Activated T-helper 1 cell treated with anti-CD3 and anti-CD28 coated beads, Interleukin-12 subunit alpha, Interleukin-12 subunit beta, Interleukin-2, Interleukin-4 antibody, amounts not matched to agents 30 ng/mL and 10 ng/mL and 1 ng/mL, durations not matched to agents 14 hours and 24 hours and 36 hours (primary cell): ENCODE measurements at regions of chr2 and their contacts with region 1.

Region 1: GRCh38 chr2:62705007-62705829 is at the start of gene EHBP1:
- DNase-seq: peak; percentile 97
- H3K4me3 Mint-ChIP-seq: peak within 1 kb of the TSS; percentile 85
- H3K27ac Mint-ChIP-seq: peak within 1 kb of the TSS; percentile 61
- H3K4me1 Mint-ChIP-seq: peaks cover 34% of the 10 kb centered on the region
- H3K27me3 Mint-ChIP-seq: peaks cover 6% of the 10 kb centered on the region
- total RNA-seq, gene EHBP1: 23.7 and 24.4 TPM in 2 replicates

Region 2: DNA sequence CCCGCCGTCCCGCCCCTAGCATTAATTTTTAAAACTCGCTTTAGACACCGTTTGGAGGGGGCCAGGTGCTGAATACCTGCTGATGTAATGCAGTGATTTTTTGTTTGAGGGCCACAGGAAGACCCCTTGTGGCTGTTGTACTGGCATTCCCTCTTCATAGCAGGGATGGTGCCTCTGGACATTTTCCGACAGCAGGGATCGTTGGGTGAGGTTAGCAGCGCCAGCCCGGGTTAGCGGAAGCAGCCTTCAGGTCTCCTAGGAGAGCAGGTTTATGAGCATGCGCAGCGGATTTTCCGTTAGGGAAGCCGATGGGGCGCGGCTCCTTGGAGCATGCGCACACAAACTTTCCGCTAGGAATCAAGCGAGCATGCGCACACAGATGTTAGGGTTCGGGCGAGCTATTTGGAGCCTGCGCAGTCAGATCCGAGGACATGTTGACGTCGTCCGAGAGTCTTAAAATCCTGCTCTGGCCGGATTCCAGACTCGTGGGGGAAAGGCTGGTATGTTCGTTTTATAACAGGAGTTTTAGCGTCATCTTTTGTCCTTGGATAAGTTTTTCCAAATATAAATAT is 1560.4 kb before region 1 on chr2:
- intact Hi-C with region 1: loop called (anchors 5 kb)
- DNase-seq: peak; percentile 92
- H3K4me3 Mint-ChIP-seq: peak overlapping the region; percentile 94
- H3K27ac Mint-ChIP-seq: peak overlapping the region; percentile 94
- H3K4me1 Mint-ChIP-seq: peaks cover 5% of the 10 kb centered on the region
- H3K27me3 Mint-ChIP-seq: no peaks in the 10 kb centered on the region

Region 3: DNA sequence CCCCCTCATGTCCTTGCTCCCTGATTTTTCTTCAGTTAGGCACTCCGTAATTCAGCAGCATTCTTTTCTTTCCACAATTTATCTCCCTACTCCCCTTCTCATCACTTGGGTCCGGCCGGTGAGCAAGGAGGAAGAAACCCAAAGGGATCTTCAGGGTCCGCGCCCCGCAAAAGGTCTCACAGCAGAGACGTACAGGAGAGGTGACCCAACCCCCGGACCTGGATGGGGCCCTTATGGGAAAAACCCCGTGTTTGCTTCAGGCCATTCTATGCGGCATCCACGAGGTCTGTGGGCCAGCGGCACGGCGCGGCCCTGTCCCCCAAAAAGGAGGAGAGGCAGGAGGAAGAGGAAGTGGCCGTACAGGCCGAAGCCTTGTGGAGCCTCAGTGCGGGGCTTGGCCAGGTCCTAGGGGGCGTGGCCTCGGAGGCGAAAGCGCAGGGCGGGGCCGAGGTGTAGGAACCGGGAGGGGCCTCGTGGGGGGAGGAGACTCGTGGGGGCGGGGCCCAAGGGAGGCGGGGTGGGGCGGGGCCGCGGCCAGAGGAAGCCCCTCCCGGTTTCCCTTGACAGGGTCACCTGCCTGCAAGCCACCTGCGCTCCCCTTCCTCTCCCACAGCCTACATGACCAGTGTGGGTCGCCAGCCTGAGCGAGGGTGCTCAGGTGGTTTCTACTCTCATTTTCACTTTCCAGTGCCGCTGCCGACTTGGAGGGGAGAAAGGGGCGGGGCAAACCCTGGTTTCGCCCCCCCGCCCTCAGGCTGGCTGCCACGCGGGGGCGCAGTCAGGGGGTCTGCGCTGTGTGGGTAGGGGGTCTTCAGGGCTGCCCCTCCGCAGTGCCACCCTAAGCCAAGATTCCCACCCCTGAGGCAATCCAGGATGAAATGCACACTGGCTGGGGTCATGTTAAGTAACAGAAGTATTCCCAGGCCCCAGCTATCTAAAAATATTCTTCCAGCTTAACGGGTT is 1010.6 kb before region 1 on chr2:
- intact Hi-C with region 1: loop called (anchors 5 kb)
- DNase-seq: peak; percentile 80
- H3K4me3 Mint-ChIP-seq: peak overlapping the region; percentile 89
- H3K27ac Mint-ChIP-seq: peak overlapping the region; percentile 76
- H3K4me1 Mint-ChIP-seq: peaks cover 14% of the 10 kb centered on the region
- H3K27me3 Mint-ChIP-seq: peaks cover 2% of the 10 kb centered on the region

Region 4: DNA sequence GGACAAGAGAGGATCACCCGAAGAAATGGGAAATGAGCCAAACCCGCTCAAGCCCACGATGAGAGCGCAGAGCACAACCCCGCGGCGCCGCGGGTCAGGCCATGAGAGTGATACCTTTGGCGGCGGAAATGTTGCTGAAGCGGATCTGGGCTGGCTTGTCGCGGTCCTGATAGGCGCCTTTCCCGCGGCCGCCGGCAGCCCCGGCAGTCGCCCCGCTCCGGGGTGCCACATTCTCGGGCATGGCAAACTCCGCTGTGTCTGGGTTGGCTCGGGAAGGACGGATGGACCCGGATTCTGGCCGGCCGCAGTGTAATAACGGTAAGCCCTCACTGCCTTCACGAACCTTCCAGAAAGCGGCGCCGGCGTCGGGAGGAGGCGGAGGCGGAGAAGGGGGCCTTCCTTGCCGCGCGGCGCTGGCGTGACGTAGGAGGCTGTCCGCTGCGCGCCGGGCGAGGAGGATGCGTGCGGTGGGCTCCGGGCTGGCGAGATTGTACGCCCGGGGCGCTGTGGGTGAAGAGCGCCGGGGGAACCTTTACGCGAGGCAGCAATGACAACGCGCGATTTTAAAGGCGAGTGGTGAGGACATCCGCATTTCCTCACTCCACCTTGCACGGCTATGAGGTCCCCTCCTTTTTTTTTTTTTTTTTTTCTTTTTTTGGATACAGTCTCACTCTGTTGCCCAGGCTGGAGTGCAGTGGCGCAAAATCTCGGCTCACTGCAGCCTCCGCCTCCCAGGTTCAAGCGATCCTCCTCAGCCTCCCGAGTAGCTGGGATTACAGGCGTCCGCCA is 816.8 kb before region 1 on chr2 and contains the start of gene CCT4:
- intact Hi-C with region 1: loop called (anchors 1 kb)
- DNase-seq: peak; percentile 86
- H3K4me3 Mint-ChIP-seq: peak within 1 kb of the TSS; percentile 95
- H3K27ac Mint-ChIP-seq: peak within 1 kb of the TSS; percentile 97
- H3K4me1 Mint-ChIP-seq: peaks cover 23% of the 10 kb centered on the region
- H3K27me3 Mint-ChIP-seq: no peaks in the 10 kb centered on the region
- total RNA-seq, gene CCT4: 354 and 381 TPM in 2 replicates

Region 5: GRCh38 chr2:62306751-62307468 is 398.3 kb before region 1 on chr2:
- intact Hi-C with region 1: loop called (anchors 5 kb)
- DNase-seq: peak; percentile 36
- H3K4me3 Mint-ChIP-seq: peak overlapping the region; percentile 54
- H3K27ac Mint-ChIP-seq: peak overlapping the region; percentile 91
- H3K4me1 Mint-ChIP-seq: peaks cover 81% of the 10 kb centered on the region
- H3K27me3 Mint-ChIP-seq: peaks cover 8% of the 10 kb centered on the region

Region 6: GRCh38 chr2:63050334-63051041 is 345.3 kb after region 1 on chr2 and contains the start of gene OTX1:
- intact Hi-C with region 1: loop called (anchors 2 kb)
- DNase-seq: no peak
- H3K4me3 Mint-ChIP-seq: peak within 1 kb of the TSS; percentile 85
- H3K27ac Mint-ChIP-seq: peak within 1 kb of the TSS; percentile 65
- H3K4me1 Mint-ChIP-seq: peaks cover 34% of the 10 kb centered on the region
- H3K27me3 Mint-ChIP-seq: peaks cover 80% of the 10 kb centered on the region
- total RNA-seq, gene OTX1: 0.31 TPM in 1 of 2 replicates, not detected in the other